B cell (primary cell): ENCODE measurements at regions of chr5 and their contacts with region 1.

Region 1: DNA sequence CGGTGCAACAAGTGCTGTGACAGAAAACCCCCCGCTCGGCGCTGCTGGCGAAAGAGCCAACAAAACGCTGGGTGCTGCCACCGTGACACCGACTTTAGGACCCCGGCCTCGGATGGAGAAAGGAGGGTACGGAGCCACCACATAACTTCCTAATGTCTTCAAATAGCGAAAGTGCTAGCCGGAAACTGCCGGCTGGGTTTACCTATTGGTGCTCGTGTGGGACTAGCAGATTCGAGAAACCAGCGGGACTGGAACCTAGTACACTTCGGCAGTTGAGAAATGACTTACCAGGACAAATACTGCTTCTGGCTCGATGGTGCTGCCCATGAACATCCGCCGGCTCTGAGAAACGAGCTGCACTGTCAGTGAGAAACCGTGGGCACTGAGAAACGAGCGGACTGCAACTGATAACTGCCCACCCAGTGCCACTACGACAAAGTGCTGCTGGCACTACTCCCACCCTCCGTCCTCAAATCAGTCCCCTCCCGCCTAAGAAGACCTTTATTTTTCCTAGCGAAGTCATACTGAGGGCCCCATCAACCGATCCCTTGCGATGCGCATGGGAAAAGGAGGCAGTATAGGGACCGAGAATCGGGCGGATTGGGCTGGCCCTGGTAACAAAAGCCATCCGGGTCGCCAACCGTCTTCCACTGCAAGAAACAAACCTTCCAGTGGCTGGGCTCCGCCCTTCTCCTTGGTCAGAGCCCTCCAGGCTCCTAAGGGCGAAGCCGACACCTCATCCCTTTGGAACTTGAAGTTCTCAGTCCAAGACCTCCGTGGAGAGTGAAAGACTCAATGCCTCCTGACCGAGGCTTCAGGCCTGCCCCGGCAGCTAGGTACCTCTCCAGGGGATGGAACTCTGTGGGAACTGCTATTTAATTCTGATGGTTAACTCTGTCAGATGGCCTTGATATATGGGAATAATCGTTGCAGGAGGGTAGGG is 27.0 kb upstream of the ANXA2R start:
- DNase-seq: peak; percentile 96
- ATAC-seq: peak; percentile 46
- H3K4me3 ChIP-seq: peak overlapping the region; percentile 87 to 100 (median 90)
- H3K4me3 Mint-ChIP-seq: peak overlapping the region; percentile 99
- H3K27ac ChIP-seq: peak overlapping the region; percentile 98 to 99
- H3K27ac Mint-ChIP-seq: peak overlapping the region; percentile 100
- H3K4me1 ChIP-seq: peaks cover 19 to 29% of the 10 kb centered on the region in 2 donors
- H3K4me1 Mint-ChIP-seq: peaks cover 37% of the 10 kb centered on the region
- H3K27me3 ChIP-seq: no peaks in the 10 kb centered on the region
- H3K27me3 Mint-ChIP-seq: no peaks in the 10 kb centered on the region
- CTCF ChIP-seq: no peak

Region 2: GRCh38 chr5:42908509-42909488 is 158.3 kb before region 1 on chr5:
- CTCF ChIA-PET with region 1: interaction called, 13 read pairs
- POLR2A ChIA-PET with region 1: interaction called, 3 read pairs
- intact Hi-C with region 1: loop called (anchors 1 kb)
- DNase-seq: peak; percentile 93
- ATAC-seq: peak; percentile 96
- H3K4me3 ChIP-seq: peak overlapping the region; percentile 52 to 88 (median 72)
- H3K4me3 Mint-ChIP-seq: peak overlapping the region; percentile 98
- H3K27ac ChIP-seq: peak overlapping the region in 1 of 2 donors; percentile 6
- H3K27ac Mint-ChIP-seq: peak overlapping the region; percentile 93
- H3K4me1 ChIP-seq: peaks cover 5 to 9% of the 10 kb centered on the region in 2 donors
- H3K4me1 Mint-ChIP-seq: peaks cover 10% of the 10 kb centered on the region
- H3K27me3 ChIP-seq: peaks cover 0 to 7% (median 2%) of the 10 kb centered on the region in 4 experiments
- H3K27me3 Mint-ChIP-seq: peaks cover 21% of the 10 kb centered on the region
- CTCF ChIP-seq: peak; percentile 88

Region 3: GRCh38 chr5:42994246-42995151 is 72.6 kb before region 1 on chr5:
- CTCF ChIA-PET with region 1: interaction called, 41 read pairs
- POLR2A ChIA-PET with region 1: interaction called, 77 read pairs
- intact Hi-C with region 1: loop called (anchors 1 kb)
- DNase-seq: peak; percentile 94
- ATAC-seq: peak; percentile 67
- H3K4me3 ChIP-seq: peak overlapping the region; percentile 78 to 97 (median 89)
- H3K4me3 Mint-ChIP-seq: peak overlapping the region; percentile 96
- H3K27ac ChIP-seq: peak overlapping the region; percentile 93 to 96
- H3K27ac Mint-ChIP-seq: peak overlapping the region; percentile 100
- H3K4me1 ChIP-seq: peaks cover 23 to 30% of the 10 kb centered on the region in 2 donors
- H3K4me1 Mint-ChIP-seq: peaks cover 32% of the 10 kb centered on the region
- H3K27me3 ChIP-seq: peaks cover 0 to 9% (median 1%) of the 10 kb centered on the region in 4 experiments
- H3K27me3 Mint-ChIP-seq: no peaks in the 10 kb centered on the region
- CTCF ChIP-seq: peak; percentile 84

Region 4: DNA sequence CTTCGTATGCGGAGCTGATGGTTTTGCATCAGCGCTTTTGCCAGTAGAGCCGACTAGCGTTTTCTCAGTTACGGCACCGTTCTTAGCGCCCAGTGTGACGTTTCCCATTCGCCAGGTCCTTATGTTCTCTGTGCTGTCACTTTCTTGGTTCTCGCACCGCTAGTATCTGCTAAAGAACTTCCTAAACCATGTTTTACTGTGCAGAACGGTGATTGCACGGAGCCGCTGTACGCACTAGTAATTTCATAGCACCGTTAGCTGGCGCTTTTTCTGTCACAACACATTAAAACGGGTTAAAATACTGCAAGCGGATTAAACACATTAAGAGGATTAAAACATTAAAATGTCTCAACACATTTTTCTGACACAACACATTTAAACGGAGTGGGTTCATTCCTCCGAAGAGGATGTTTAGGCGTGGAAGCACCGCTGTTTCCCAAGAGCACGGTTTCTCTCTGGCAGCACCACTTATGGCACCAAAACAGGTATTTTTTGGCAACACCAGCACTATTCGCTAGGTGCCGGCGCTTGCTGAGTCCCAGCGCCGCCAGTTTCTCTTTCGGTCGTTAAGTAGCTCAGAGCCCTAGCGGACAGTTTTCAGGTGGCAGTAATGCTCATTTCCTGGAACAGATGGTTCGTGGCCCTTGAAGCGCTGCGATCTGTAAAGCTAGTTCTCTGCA is 47.3 kb before region 1 on chr5:
- CTCF ChIA-PET with region 1: interaction called, 33 read pairs
- POLR2A ChIA-PET with region 1: interaction called, 71 read pairs
- intact Hi-C with region 1: loop called (anchors 1 kb)
- DNase-seq: peak; percentile 94
- ATAC-seq: peak; percentile 63
- H3K4me3 ChIP-seq: peak overlapping the region; percentile 63 to 99 (median 80)
- H3K4me3 Mint-ChIP-seq: peak overlapping the region; percentile 99
- H3K27ac ChIP-seq: peak overlapping the region; percentile 96 to 98
- H3K27ac Mint-ChIP-seq: peak overlapping the region; percentile 100
- H3K4me1 ChIP-seq: peaks cover 25 to 32% of the 10 kb centered on the region in 2 donors
- H3K4me1 Mint-ChIP-seq: peaks cover 42% of the 10 kb centered on the region
- H3K27me3 ChIP-seq: no peaks in the 10 kb centered on the region
- H3K27me3 Mint-ChIP-seq: no peaks in the 10 kb centered on the region
- CTCF ChIP-seq: peak; percentile 77

Region 5: GRCh38 chr5:43105369-43106289 is 38.6 kb after region 1 on chr5:
- CTCF ChIA-PET with region 1: interaction called, 7 read pairs
- POLR2A ChIA-PET with region 1: no interaction called
- intact Hi-C with region 1: loop called (anchors 1 kb)
- DNase-seq: peak; percentile 94
- ATAC-seq: peak; percentile 97
- H3K4me3 ChIP-seq: peak overlapping the region; percentile 58 to 85 (median 66)
- H3K4me3 Mint-ChIP-seq: peak overlapping the region; percentile 90
- H3K27ac ChIP-seq: peak overlapping the region; percentile 49 to 71
- H3K27ac Mint-ChIP-seq: peak overlapping the region; percentile 83
- H3K4me1 ChIP-seq: peaks cover 0 to 12% of the 10 kb centered on the region in 2 donors
- H3K4me1 Mint-ChIP-seq: peaks cover 11% of the 10 kb centered on the region
- H3K27me3 ChIP-seq: no peaks in the 10 kb centered on the region
- H3K27me3 Mint-ChIP-seq: no peaks in the 10 kb centered on the region
- CTCF ChIP-seq: peak; percentile 100

Region 6: DNA sequence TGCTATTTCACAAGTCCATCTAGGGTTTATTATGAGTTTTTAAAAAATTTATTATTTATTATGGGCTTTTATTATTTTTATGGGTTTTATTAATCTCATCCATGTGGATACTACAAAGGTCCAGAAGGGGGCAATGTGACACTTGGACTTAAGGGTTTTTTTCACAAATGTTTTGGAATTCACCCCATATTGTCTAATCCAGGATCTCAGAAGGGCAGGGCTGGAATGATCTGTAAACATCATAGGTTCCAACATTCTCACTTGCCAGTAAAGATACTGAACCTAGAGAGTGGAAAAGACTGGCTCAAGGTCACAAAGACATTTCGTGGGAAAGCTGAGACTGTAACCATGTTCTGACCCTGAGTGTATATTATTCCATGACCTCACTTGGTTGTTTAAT is 160.6 kb after region 1 on chr5:
- CTCF ChIA-PET with region 1: no interaction called
- POLR2A ChIA-PET with region 1: no interaction called
- intact Hi-C with region 1: no loop called
- DNase-seq: no peak
- ATAC-seq: no peak
- H3K4me3 ChIP-seq: no peak overlapping the region
- H3K4me3 Mint-ChIP-seq: no peak overlapping the region
- H3K27ac ChIP-seq: no peak overlapping the region
- H3K27ac Mint-ChIP-seq: no peak overlapping the region
- H3K4me1 ChIP-seq: no peaks in the 10 kb centered on the region
- H3K4me1 Mint-ChIP-seq: no peaks in the 10 kb centered on the region
- H3K27me3 ChIP-seq: no peaks in the 10 kb centered on the region
- H3K27me3 Mint-ChIP-seq: no peaks in the 10 kb centered on the region
- CTCF ChIP-seq: peak; percentile 16

Region 7: DNA sequence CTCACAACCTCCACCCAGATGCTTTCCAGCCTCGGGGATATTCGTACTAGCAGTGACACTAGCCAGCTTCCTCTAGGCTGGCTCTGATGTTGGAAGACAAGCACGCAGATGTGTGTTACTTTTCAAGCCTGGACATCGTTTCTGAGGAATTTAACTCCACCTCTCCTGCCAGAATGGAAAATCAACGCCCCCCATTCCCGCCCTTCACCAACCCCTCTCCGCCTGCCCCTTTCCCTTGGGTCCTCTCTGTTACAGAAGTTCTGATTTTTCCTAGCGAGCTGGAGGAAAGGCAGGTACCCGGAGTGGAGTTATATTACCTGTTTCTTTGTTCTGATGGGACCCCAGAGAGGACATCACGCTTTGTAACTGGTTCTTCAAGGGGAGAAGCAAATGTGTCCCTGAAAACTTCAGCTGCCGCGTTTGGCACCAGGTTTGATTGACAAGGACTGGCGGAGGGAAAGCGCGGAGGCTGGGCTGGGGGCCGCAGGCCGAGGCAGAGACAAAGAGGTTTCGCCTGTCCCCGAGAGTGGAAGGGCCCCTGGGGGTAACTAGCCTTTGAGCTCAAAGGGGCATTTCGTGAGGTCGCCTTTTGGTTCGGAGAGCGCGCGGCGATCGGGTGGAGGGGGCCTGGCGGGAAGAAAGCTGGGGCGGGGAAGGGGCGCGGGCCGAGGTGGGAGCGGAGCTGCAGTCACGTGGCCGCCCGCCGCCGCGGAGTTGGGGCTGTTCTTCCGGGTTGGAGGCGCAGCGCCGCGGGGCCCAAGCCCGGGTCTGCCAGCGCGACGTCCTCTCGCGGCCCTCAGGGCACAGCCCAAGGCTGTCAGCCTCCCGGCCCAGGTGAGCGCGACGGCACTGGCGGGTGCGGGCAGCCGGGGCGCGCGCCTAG is 535.6 kb after region 1 on chr5 and contains the start of gene NNT:
- CTCF ChIA-PET with region 1: no interaction called
- POLR2A ChIA-PET with region 1: no interaction called
- intact Hi-C with region 1: loop called (anchors 5 kb)
- DNase-seq: peak; percentile 83
- ATAC-seq: peak; percentile 71
- H3K4me3 ChIP-seq: peak within 1 kb of the TSS; percentile 65 to 99 (median 80)
- H3K4me3 Mint-ChIP-seq: peak within 1 kb of the TSS; percentile 95
- H3K27ac ChIP-seq: peak within 1 kb of the TSS; percentile 75 to 89
- H3K27ac Mint-ChIP-seq: peak within 1 kb of the TSS; percentile 91
- H3K4me1 ChIP-seq: peaks cover 16 to 24% of the 10 kb centered on the region in 2 donors
- H3K4me1 Mint-ChIP-seq: peaks cover 34% of the 10 kb centered on the region
- H3K27me3 ChIP-seq: no peaks in the 10 kb centered on the region
- H3K27me3 Mint-ChIP-seq: no peaks in the 10 kb centered on the region
- CTCF ChIP-seq: no peak
- total RNA-seq, gene NNT: 61.1 and 63.0 TPM in 2 replicates